ENCODE measurements at regions of chr6 and their contacts with region 1.

Region 1: DNA sequence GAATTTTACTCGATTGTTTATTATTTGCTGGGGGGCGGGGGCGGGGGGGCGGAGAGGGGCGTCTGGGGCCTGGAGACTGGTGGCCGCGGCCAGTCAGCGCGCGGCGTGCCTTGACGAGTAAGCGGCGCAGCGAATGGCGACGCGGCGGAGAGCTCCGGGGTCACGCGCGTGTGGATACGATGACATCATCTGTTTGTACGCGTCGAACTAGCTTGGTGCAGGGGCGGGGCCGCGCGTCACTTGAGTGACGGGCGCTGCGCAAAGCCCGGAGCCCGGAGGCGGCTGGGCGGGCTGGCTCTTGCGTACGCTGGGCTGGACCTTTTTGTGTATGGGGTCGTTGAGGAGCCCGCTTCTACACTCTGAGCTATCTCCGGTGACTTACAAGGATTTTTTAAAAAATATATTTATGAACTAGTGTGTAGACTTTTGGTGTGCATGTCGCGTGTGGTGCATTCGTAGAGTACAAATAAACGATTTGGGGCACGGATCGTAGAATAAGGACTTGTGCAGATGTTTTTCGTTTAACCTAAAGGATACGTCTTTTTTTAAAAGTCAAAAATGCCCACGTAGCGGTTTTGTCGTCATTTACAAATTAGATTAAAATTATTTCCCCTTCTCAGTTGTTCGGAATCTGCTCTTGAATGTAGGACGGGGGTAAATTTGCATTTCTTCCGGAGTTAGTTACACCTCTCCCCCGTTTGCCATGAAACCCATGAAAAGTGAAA is 2.2 kb upstream of the FOXO3 start:
- DNase-seq: peak; percentile 99
- ATAC-seq: peak; percentile 64 to 75 (median 66)
- H3K4me3 ChIP-seq: peak overlapping the region; percentile 76
- H3K27ac ChIP-seq: peak overlapping the region; percentile 95
- H3K4me1 ChIP-seq: peaks cover 35% of the 10 kb centered on the region
- H3K27me3 ChIP-seq: no peaks in the 10 kb centered on the region
- CTCF ChIP-seq: no peak

Region 2: GRCh38 chr6:108592371-108593337 is 34.1 kb after region 1 on chr6:
- intact Hi-C with region 1: loop called in 1 of 2 experiments (anchors 5 kb)
- DNase-seq: peak; percentile 60 to 84
- ATAC-seq: peak; percentile 79 to 86 (median 83)
- H3K4me3 ChIP-seq: no peak overlapping the region
- H3K27ac ChIP-seq: peak overlapping the region; percentile 82
- H3K4me1 ChIP-seq: peaks cover 100% of the 10 kb centered on the region
- H3K27me3 ChIP-seq: no peaks in the 10 kb centered on the region
- CTCF ChIP-seq: no peak

Region 3: DNA sequence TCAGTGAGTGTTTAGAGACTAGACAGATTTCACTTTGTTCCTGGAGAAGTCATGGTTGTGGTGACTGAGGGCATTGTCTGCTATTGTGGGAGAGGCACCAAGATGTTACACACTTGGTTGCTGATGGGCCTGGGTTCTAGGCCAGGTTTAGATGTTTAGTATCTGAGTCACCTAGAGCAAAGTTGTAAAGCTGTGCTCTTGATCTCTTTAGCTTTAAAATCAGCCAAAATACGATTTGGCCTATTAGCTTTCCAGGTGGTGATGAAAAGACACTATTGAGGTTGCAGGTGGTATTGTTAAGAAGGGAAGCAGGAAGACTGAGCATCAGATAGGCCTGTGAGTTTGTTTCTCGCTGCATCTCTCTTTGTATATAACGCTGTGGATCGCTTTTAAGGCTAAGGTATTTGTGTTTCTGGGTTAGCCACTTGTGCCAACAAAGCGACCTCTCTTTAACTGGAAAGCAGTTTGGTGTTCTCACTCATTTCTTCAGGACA is 50.8 kb after region 1 on chr6:
- intact Hi-C with region 1: loop called in 1 of 2 experiments (anchors 5 kb)
- DNase-seq: peak in 1 of 2 donors; percentile 22
- ATAC-seq: peak; percentile 82 to 94 (median 92)
- H3K4me3 ChIP-seq: no peak overlapping the region
- H3K27ac ChIP-seq: peak overlapping the region; percentile 77
- H3K4me1 ChIP-seq: peaks cover 75% of the 10 kb centered on the region
- H3K27me3 ChIP-seq: no peaks in the 10 kb centered on the region
- CTCF ChIP-seq: no peak

Region 4: GRCh38 chr6:108655806-108656651 is 97.5 kb after region 1 on chr6:
- intact Hi-C with region 1: loop called (anchors 5 kb)
- DNase-seq: no peak
- ATAC-seq: peak; percentile 32 to 55 (median 48)
- H3K4me3 ChIP-seq: peak overlapping the region; percentile 66
- H3K27ac ChIP-seq: peak overlapping the region; percentile 84
- H3K4me1 ChIP-seq: peaks cover 91% of the 10 kb centered on the region
- H3K27me3 ChIP-seq: no peaks in the 10 kb centered on the region
- CTCF ChIP-seq: no peak

Region 5: GRCh38 chr6:108782179-108783041 is 223.9 kb after region 1 on chr6:
- intact Hi-C with region 1: loop called (anchors 5 kb)
- DNase-seq: peak; percentile 81 to 91
- ATAC-seq: peak; percentile 94 to 98 (median 96)
- H3K4me3 ChIP-seq: peak overlapping the region; percentile 65
- H3K27ac ChIP-seq: peak overlapping the region; percentile 13
- H3K4me1 ChIP-seq: peaks cover 3% of the 10 kb centered on the region
- H3K27me3 ChIP-seq: no peaks in the 10 kb centered on the region
- CTCF ChIP-seq: peak; percentile 68

Region 6: GRCh38 chr6:109009236-109009961 is 450.9 kb after region 1 on chr6:
- intact Hi-C with region 1: loop called in 1 of 2 experiments (anchors 5 kb)
- DNase-seq: peak; percentile 97
- ATAC-seq: peak; percentile 94 to 98 (median 95)
- H3K4me3 ChIP-seq: peak overlapping the region; percentile 71
- H3K27ac ChIP-seq: peak overlapping the region; percentile 97
- H3K4me1 ChIP-seq: peaks cover 48% of the 10 kb centered on the region
- H3K27me3 ChIP-seq: no peaks in the 10 kb centered on the region
- CTCF ChIP-seq: peak; percentile 15